ENCODE measurements at regions of chr12 and their contacts with region 1.

Region 1: GRCh38 chr12:12376646-12377448 is 20.0 kb downstream of the BORCS5 start:
- DNase-seq: no peak
- ATAC-seq: peak; percentile 70

Region 2: DNA sequence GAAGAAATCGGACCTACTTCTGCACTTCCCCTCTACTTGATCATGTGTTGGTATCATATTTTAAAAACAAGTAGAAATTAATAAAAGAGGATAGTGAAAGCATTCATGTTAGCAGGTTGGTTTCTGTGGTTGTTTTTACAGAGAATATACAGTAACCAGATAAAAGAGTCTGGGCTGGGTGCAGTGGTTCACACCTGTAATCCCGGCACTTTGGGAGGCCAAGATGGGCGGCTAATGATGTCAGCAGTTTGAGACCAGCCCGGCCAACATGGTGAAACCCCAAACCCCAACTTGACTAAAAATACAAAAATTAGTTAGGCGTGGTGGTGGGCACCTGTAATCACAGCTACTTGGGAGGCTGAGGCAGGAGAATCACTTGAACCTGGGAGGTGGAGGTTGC is 165.9 kb before region 1 on chr12:
- intact Hi-C with region 1: no loop called
- DNase-seq: no peak
- ATAC-seq: no peak

Region 3: DNA sequence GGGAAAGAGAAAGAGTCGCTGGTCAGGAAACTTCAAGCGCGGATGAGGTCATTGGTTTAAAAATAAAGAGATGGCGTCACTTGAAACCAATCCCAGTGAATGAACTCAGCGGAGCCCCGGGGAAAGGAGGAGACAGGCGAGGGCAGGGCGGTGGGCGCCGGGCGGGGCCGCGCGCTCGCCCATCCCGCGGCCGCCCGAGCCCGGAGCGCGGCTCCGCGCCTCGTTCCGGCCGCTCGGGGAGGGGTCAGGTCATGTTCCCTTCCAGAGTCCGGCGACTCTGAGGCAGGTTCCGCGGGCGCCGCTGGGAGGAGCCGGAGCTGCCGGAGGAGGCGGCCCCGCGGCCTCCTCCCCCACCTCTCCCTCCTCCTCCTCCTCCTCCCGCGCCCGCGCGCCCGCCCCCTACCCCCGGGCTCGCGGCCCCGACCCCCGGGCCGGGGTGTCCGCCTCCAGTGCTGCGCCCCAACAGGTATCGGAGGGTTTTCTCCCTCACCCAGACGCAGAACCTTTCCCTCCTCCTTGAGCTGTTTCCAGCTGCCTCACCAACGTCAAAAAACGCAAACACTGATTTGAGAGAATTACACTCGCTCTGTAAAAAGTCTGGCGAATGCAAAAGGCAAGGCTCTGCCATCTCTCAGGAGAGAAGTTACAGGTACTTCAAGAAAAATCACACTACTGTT is 185.9 kb after region 1 on chr12 and contains the start of gene DUSP16:
- intact Hi-C with region 1: loop called in 1 of 2 experiments (anchors 10 kb)
- DNase-seq: peak; percentile 91 to 92
- ATAC-seq: peak; percentile 83
- total RNA-seq, gene DUSP16: 38.6 to 73.5 TPM

Region 4: DNA sequence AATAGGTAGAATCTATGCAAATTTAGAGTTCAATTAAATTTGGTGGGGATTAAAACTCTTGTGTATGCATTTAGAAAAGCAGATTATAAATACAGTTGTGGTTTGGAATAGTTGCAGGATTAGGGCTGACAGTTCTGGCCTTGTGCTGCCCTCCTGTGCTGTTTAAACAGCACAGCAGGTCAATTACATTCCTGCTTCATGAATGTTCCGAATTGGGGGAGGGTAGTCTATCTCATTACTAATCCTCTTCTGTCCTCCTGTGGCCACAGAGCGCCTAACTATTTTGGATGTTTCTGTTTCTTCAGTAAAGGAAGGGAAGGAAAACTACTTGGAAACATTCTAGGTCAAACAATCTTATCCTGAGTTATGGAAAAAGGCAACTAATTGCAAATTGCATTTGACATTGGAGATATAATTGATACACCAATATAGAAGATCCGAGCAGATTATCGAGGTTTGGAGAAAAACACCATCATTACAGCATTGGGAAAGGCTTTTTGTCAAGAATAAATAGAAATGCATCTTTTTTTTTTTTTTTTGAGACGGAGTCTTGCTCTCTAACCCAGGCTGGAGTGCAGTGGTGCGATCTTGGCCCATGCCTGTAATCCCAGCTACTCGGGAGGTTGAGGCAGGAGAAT is 327.9 kb after region 1 on chr12:
- intact Hi-C with region 1: loop called in 1 of 2 experiments (anchors 5 kb)
- DNase-seq: peak; percentile 50 to 63
- ATAC-seq: peak; percentile 92

Region 5: DNA sequence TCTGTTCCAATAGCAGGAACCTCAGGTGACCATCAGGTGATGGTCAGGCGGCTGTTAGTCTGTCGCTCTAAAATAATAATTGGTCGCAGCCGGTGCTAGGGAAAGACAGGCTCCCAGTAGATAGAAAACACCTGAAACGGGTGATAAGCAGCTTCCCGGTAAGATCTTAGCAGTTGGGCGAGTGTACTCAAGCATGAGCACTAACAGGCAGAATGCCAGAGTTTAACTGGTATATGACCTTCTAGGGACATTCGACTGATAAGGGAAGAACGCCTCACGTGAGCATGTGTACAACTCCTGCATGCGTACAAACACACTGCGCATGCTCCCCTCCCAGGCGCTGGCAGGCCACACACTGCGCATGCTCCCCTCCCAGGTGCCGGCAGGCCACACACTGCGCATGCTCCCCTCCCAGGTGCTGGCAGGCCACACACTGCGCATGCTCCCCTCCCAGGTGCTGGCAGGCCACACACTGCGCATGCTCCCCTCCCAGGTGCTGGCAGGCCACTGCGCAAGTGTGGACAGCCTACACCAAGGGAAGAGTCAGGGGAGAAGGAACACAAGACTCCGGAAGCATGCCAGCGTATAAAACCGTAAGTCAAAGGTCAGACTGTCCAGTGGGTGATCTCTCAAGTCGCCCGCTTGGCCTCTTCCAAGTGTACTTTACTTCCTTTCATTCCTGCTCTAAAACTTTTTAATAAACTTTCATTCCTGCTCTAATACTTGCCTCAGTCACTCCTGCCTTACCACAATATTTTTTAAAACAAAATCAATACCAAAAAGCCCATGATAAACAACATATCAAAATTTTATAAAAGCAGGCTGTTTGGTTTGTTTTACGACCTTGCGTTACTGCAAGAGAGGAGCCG is 550.6 kb after region 1 on chr12:
- intact Hi-C with region 1: no loop called
- DNase-seq: peak; percentile 77 to 91
- ATAC-seq: peak; percentile 93

Measured in left colon (tissue), 2 donors.